ENCODE measurements at regions of chr6 and their contacts with region 1.

Region 1: GRCh38 chr6:166736634-166737033 is 109.6 kb upstream of the RPS6KA2 start:
- DNase-seq: peak; percentile 85
- H3K4me3 ChIP-seq: no peak overlapping the region
- H3K27ac ChIP-seq: no peak overlapping the region
- H3K4me1 ChIP-seq: peaks cover 11% of the 10 kb centered on the region
- H3K27me3 ChIP-seq: no peaks in the 10 kb centered on the region
- CTCF ChIP-seq: no peak

Region 2: DNA sequence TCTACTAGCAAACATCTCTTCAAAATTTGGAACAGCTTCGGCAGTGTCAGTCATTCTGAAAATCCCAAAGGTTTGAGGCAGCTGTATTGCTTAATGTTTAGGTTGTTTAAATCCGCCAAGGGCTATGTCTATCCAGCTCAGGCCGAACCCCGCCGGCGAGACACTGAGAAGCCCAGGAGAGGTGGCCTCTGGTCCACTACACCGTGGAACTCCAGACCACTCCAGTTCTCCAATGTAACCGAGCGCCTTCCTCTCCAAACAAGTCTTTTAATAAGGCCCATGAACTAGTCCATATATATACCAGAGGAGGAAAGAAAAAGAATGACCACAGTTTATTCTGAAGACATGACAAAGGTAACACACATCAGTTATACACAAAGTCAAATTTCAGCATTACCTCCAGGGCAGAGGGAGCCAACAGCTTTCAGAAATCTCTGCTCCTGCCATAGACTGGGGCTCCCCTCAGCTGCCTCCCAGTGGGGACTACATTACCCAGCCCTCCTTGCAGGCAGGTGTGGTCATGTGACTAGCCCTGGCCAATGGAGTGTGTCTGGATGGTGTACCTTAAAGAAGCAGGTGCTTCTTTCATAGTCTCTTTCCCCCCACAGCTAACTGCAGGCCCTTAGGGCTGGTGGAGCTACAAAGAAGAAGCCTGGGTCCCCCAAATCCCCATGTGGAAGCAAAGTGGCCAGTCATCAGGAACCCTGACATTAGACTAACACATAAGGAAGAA is 150.0 kb before region 1 on chr6 and contains the start of gene RAMACL:
- CTCF ChIA-PET with region 1: no interaction called
- POLR2A ChIA-PET with region 1: no interaction called
- intact Hi-C with region 1: loop called (anchors 5 kb)
- DNase-seq: peak; percentile 24
- H3K4me3 ChIP-seq: no peak within 1 kb of the TSS
- H3K27ac ChIP-seq: no peak within 1 kb of the TSS
- H3K4me1 ChIP-seq: peaks cover 53% of the 10 kb centered on the region
- H3K27me3 ChIP-seq: no peaks in the 10 kb centered on the region
- CTCF ChIP-seq: no peak
- total RNA-seq, gene RAMACL: 0.77 and 2.2 TPM in 2 replicates

Measured in A673 (cell line).